Prostate gland (tissue), 2 donors: ENCODE measurements at regions of chr4 and their contacts with region 1.

Region 1: GRCh38 chr4:102449751-102450352 is 51.3 kb upstream of the NFKB1 start:
- DNase-seq: peak; percentile 59
- H3K4me3 ChIP-seq: no peak overlapping the region
- H3K27ac ChIP-seq: no peak overlapping the region
- H3K4me1 ChIP-seq: no peaks in the 10 kb centered on the region
- H3K27me3 ChIP-seq: no peaks in the 10 kb centered on the region
- CTCF ChIP-seq: peak; percentile 21 to 66 (median 60)
- POLR2A ChIP-seq: no peak

Region 2: DNA sequence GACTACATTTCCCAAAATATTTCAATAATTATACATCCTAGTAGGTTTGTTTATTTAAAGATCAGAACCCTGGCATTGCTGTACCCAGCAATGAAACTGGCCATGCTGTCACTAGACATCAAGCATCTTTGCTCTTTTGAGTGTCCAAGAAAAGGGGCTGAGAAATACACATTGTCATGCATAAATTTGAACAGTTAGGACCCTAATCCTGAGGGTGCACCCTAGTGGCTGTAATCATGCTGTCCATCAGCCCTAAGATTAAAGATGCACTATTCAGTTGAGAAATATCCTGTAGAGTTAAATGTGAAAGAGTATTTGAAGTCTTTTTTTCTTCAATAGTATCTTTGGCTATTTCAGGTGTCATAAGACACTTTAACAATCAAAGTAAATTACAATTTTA is 160.2 kb after region 1 on chr4:
- intact Hi-C with region 1: loop called (anchors 5 kb)
- DNase-seq: no peak
- H3K4me3 ChIP-seq: no peak overlapping the region
- H3K27ac ChIP-seq: no peak overlapping the region
- H3K4me1 ChIP-seq: no peaks in the 10 kb centered on the region
- H3K27me3 ChIP-seq: no peaks in the 10 kb centered on the region
- CTCF ChIP-seq: peak in 1 of 4 experiments; percentile 8
- POLR2A ChIP-seq: no peak

Region 3: GRCh38 chr4:103091601-103092223 is 641.9 kb after region 1 on chr4:
- intact Hi-C with region 1: loop called (anchors 5 kb)
- DNase-seq: peak; percentile 10
- H3K4me3 ChIP-seq: no peak overlapping the region
- H3K27ac ChIP-seq: no peak overlapping the region
- H3K4me1 ChIP-seq: no peaks in the 10 kb centered on the region
- H3K27me3 ChIP-seq: no peaks in the 10 kb centered on the region
- CTCF ChIP-seq: peak in 3 of 4 experiments; percentile 28 to 50 (median 43)
- POLR2A ChIP-seq: no peak